Pancreas (tissue), 10 donors: ENCODE measurements at regions of chr11 and their contacts with region 1.

Region 1: GRCh38 chr11:72573072-72573854 is 101.0 kb downstream of the PDE2A start:
- DNase-seq: peak in 1 of 6 donors; percentile 25
- ATAC-seq: peak; percentile 72 to 88 (median 82)
- H3K4me3 ChIP-seq: no peak overlapping the region
- H3K27ac ChIP-seq: no peak overlapping the region
- H3K4me1 ChIP-seq: no peaks in the 10 kb centered on the region
- H3K27me3 ChIP-seq: no peaks in the 10 kb centered on the region
- CTCF ChIP-seq: peak; percentile 15 to 42 (median 24)

Region 2: DNA sequence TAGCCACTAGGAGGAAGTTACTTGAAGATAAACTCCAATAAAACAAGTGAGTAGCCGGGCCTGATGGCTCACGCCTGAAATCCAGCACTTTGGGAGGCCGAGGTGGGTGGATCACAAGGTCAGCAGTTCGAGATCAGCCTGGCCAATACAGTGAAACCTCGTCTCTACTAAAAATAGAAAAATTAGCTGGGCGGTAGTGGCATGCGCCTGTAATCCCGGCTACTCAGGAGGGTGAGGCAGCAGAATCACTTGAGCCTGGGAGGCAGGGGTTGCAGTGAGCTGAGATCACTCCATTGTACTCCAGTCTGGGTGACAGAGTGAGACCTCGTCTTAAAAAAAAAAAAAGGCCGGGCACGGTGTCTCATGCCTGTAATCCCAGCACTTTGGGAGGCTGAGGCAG is 105.0 kb before region 1 on chr11:
- intact Hi-C with region 1: loop called in 1 of 3 experiments (anchors 10 kb)
- DNase-seq: no peak
- ATAC-seq: no peak
- H3K4me3 ChIP-seq: no peak overlapping the region
- H3K27ac ChIP-seq: no peak overlapping the region
- H3K4me1 ChIP-seq: no peaks in the 10 kb centered on the region
- H3K27me3 ChIP-seq: no peaks in the 10 kb centered on the region
- CTCF ChIP-seq: no peak

Region 3: GRCh38 chr11:72478659-72479058 is 94.6 kb before region 1 on chr11:
- intact Hi-C with region 1: loop called in 1 of 3 experiments (anchors 5 kb)
- DNase-seq: no peak
- ATAC-seq: no peak
- H3K4me3 ChIP-seq: no peak overlapping the region
- H3K27ac ChIP-seq: no peak overlapping the region
- H3K4me1 ChIP-seq: no peaks in the 10 kb centered on the region
- H3K27me3 ChIP-seq: no peaks in the 10 kb centered on the region
- CTCF ChIP-seq: no peak

Region 4: DNA sequence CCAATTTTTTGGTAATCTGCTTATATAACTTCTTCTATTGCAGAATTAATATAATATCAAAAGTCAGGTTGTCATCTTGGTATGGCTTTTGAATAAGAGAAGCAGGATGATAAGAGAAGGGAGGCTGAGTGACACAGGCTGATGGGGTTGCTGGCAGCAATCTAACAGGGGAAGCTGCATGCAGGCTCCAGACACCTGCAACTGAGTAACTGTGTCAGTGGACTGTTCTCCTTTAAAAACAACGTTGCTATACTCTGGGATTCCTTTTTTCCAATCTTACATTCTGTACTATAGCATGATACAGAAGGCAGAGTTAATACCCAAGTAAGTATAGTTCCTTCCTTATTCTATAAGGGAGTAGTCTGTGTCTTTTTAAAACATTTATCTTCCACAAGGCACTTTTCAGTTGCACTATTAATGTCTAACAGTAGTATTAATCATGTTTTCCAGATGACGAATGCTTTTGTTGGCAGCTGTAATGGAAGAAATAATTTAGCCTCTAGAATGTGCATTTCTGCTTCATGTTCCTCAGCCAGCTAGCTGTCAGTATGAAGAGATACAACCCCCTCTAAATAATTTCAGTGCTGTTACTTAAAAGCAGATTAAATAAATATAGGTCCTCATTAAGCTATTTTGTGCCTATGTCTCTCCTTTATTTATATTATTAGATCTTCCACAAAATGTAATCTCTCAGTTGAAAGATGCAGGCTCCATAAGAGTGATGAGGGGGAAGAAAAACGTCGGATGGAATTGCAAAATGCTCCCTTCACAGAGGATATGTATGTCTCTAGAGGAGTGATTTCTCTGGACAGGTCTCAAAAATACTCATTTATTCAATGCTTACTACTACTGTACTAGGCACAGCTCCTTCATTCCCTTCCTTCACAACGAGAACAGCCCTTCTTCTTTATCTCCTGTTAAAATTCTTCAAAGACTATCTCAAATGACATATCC is 291.7 kb after region 1 on chr11:
- intact Hi-C with region 1: no loop called
- DNase-seq: no peak
- ATAC-seq: peak in 3 of 4 donors; percentile 22 to 37 (median 30)
- H3K4me3 ChIP-seq: no peak overlapping the region
- H3K27ac ChIP-seq: no peak overlapping the region
- H3K4me1 ChIP-seq: peaks cover 6 to 12% (median 11%) of the 10 kb centered on the region in 3 donors
- H3K27me3 ChIP-seq: no peaks in the 10 kb centered on the region
- CTCF ChIP-seq: no peak

Region 5: GRCh38 chr11:73426219-73426850 is 853.1 kb after region 1 on chr11:
- intact Hi-C with region 1: no loop called
- DNase-seq: no peak
- ATAC-seq: no peak
- H3K4me3 ChIP-seq: no peak overlapping the region
- H3K27ac ChIP-seq: no peak overlapping the region
- H3K4me1 ChIP-seq: no peaks in the 10 kb centered on the region
- H3K27me3 ChIP-seq: no peaks in the 10 kb centered on the region
- CTCF ChIP-seq: no peak